GM12878 (cell line): ENCODE measurements at regions of chr5 and their contacts with region 1.

Region 1: DNA sequence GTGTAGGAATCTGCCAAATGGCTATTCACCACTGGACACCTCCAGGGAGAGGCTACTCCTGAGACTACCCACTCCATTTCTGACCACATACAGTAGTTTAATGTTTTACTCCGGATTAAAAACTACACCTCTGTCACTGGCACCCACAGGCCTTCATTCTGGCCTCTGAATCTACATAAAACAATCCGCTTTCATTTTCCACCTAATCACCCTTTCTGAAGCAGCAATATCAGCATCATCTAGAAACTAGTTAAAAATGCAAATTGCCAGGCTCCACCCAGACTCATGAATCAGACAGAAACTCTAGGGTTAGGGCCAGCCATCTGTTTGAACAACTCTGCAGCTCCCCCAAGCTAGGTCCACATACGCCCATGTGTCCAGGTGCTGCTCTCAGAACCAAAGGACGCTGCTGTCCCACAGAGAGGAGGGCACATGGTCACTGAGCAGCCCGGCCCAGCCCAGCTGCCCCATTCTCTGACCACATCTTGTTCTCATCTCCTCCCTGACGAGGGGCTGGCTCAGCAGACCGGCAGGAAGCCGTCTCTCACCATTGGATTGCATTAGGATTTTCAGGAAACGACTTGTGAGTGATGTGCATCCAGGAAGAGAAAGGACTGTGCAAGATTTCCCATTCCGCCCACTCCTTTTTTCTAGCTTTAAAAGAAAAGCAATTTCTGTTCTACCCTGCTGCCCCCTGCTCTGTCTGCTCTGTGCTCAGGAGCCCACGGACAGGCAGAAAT is 34.7 kb downstream of the ADAM19 start:
- DNase-seq: peak; percentile 87
- ATAC-seq: peak; percentile 93
- H3K4me3 ChIP-seq: peak overlapping the region; percentile 56
- H3K27ac ChIP-seq: peak overlapping the region; percentile 92
- H3K4me1 ChIP-seq: peaks cover 49% of the 10 kb centered on the region
- H3K27me3 ChIP-seq: no peaks in the 10 kb centered on the region
- CTCF ChIP-seq: no peak
- EP300 ChIP-seq: peak; percentile 50 to 64; a peak in 2 of 4 replicates
- POLR2A ChIP-seq: peak; percentile 51
- RAD21 ChIP-seq: peak; percentile 12; the same call in 1 of the 2 replicates

Region 2: GRCh38 chr5:157516626-157517325 is 24.1 kb before region 1 on chr5:
- CTCF ChIA-PET with region 1: interaction called, 27 read pairs
- POLR2A ChIA-PET with region 1: interaction called, 11 read pairs
- RAD21 ChIA-PET with region 1: interaction called, 35 read pairs
- SMC1A ChIA-PET with region 1: interaction called, 40 read pairs
- in situ Hi-C with region 1: no loop called
- intact Hi-C with region 1: loop called (anchors 2 kb)
- DNase-seq: no peak
- ATAC-seq: no peak
- H3K4me3 ChIP-seq: no peak overlapping the region
- H3K27ac ChIP-seq: no peak overlapping the region
- H3K4me1 ChIP-seq: peaks cover 29% of the 10 kb centered on the region
- H3K27me3 ChIP-seq: no peaks in the 10 kb centered on the region
- CTCF ChIP-seq: no peak
- EP300 ChIP-seq: no peak
- POLR2A ChIP-seq: no peak
- RAD21 ChIP-seq: no peak

Region 3: GRCh38 chr5:157563373-157563928 is 22.6 kb after region 1 on chr5:
- CTCF ChIA-PET with region 1: interaction called, 16 read pairs
- POLR2A ChIA-PET with region 1: interaction called, 10 read pairs
- RAD21 ChIA-PET with region 1: interaction called, 20 read pairs
- SMC1A ChIA-PET with region 1: interaction called, 12 read pairs
- in situ Hi-C with region 1: no loop called
- intact Hi-C with region 1: no loop called
- DNase-seq: no peak
- ATAC-seq: no peak
- H3K4me3 ChIP-seq: no peak overlapping the region
- H3K27ac ChIP-seq: no peak overlapping the region
- H3K4me1 ChIP-seq: peaks cover 8% of the 10 kb centered on the region; the same call in 1 of the 2 replicates
- H3K27me3 ChIP-seq: no peaks in the 10 kb centered on the region
- CTCF ChIP-seq: no peak
- EP300 ChIP-seq: no peak
- POLR2A ChIP-seq: no peak
- RAD21 ChIP-seq: no peak

Region 4: DNA sequence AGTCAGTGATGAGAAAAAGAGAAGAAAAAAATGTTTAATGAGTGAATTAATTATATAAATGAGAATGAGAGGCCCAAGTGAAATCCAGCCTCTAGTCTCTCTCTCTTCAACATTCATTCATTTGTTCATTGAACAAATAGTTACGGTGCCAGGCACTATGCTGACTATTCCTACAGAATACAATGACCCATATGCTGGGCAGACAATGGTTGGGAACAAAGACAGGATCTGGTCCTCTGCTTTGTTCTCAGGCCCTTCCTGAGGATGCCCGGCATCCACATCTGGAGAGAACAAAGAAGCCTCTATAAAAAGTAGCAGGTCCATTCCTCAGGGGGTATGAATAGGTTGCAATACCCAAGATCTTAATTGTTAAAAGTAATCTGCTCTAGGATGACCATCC is 27.8 kb after region 1 on chr5:
- CTCF ChIA-PET with region 1: interaction called, 16 read pairs
- POLR2A ChIA-PET with region 1: interaction called, 9 read pairs
- RAD21 ChIA-PET with region 1: interaction called, 26 read pairs
- SMC1A ChIA-PET with region 1: interaction called, 15 read pairs
- in situ Hi-C with region 1: no loop called
- intact Hi-C with region 1: loop called (anchors 1 kb)
- DNase-seq: no peak
- ATAC-seq: no peak
- H3K4me3 ChIP-seq: no peak overlapping the region
- H3K27ac ChIP-seq: no peak overlapping the region
- H3K4me1 ChIP-seq: peaks cover 32% of the 10 kb centered on the region
- H3K27me3 ChIP-seq: no peaks in the 10 kb centered on the region
- CTCF ChIP-seq: no peak
- EP300 ChIP-seq: no peak
- POLR2A ChIP-seq: no peak
- RAD21 ChIP-seq: no peak